ENCODE measurements at regions of chr10 and their contacts with region 1.

Region 1: DNA sequence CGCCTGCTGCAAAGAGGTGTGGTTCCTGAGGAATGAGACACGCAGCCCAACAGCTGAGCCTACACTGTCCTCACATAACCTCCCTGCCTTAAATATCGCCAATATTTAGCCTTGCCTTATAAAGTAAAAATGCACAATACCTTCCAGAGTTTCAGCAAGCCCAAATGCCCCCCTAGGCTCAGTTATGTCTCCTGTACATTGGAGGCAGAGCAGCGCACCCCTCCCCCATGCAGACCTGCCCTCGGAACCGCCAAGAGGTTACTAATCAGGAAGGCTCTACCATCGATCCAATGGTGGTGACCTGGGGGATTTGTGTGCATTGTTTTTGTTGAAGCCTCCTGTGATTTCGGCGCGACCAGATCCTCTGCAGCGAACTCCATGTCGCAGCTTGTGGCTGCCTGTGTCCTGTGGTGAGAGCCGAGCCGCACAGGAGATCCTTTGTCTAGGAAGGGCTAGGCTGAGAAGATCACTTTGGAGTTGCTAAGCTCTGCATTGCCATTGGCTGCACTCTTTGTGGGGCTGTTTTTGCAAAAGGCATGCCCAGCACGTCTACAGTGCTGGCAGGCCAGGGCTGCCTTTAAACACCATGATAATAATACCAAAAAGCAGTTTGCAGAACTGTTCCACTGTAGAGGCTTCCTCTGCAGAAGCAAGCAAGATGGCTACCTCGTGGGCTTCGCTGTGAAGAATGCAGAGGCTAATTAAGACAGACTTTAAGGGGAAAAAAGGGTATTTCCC is 40.1 kb downstream of the TET1 start:
- DNase-seq: peak; percentile 67
- ATAC-seq: peak; percentile 96

Region 2: DNA sequence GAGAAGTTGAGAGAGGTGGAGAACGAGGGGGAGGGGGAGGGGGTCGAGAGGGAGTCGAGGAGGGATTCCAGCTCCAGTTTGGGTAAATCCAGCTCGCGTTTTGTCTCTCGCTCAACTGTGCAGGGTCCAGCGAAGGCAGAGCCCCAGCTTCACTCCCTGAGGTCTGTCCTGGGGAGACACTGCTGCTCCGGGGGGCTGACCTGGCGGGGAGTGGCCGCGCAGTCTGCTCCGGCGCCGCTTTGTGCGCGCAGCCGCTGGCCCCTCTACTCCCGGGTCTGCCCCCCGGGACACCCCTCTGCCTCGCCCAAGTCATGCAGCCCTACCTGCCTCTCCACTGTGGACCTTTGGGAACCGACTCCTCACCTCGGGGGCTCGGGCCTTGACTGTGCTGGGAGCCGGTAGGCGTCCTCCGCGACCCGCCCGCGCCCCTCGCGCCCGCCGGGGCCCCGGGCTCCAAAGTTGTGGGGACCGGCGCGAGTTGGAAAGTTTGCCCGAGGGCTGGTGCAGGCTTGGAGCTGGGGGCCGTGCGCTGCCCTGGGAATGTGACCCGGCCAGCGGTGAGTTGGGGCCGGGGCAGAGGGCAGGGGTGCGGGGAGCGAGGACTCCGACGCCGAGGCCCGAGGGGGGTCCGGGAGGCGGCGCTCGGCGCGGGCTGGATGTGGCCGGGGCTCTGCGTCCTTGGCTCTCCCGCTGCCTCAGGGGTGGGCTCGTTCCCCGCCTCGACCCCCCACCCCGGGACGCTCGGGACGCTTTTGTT is 39.8 kb before region 1 on chr10 and contains the start of gene TET1:
- intact Hi-C with region 1: loop called (anchors 5 kb)
- DNase-seq: peak; percentile 75
- ATAC-seq: peak; percentile 85
- total RNA-seq, gene TET1: 10.4 TPM